ENCODE measurements at regions of chr9 and their contacts with region 1.

Region 1: GRCh38 chr9:107465467-107466451 is 23.8 kb downstream of the KLF4 start:
- DNase-seq: peak in 9 of 10 donors; percentile 20 to 92 (median 60)

Region 2: GRCh38 chr9:106945727-106946660 is 519.8 kb before region 1 on chr9:
- intact Hi-C with region 1: no loop called
- DNase-seq: no peak

Region 3: GRCh38 chr9:107489687-107490605 is 24.2 kb after region 1 on chr9 and contains the start of gene KLF4:
- intact Hi-C with region 1: loop called (anchors 2 kb)
- DNase-seq: peak; percentile 65 to 97 (median 78)

Region 4: GRCh38 chr9:107548048-107548800 is 82.5 kb after region 1 on chr9:
- intact Hi-C with region 1: no loop called
- DNase-seq: peak in 2 of 10 donors; percentile 21 to 63

Region 5: DNA sequence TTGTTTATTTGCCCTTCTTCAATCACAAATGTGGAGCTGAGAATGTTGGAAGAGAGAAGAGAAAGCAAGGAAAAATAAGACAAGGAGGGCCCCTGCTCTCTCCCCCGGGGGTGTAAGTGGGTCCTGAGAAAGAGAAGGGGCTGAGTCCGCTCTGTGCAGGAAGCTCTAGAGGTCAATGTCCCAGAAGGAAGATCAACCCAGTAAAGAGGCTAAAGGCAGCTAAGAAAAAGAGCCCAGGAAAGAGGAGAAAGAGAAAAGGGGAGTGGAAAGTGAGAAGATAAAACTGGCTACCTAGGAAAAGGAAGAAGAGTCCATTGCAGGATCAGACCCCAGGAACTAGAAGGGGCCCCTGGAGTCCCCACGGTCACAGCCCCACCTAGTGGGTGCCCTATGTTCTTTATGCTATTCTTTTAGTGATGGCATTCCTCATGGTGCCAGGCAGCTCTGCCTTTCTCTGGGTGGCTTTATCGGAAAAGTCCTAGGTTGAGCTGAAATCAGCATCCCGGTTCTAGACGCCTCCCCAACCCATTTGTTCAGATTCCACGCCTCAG is 806.7 kb after region 1 on chr9:
- intact Hi-C with region 1: loop called (anchors 5 kb)
- DNase-seq: peak in 8 of 10 donors; percentile 18 to 92 (median 54)

Region 6: GRCh38 chr9:108551030-108551838 is 1085.5 kb after region 1 on chr9:
- intact Hi-C with region 1: loop called (anchors 10 kb)
- DNase-seq: no peak

Region 7: GRCh38 chr9:108761655-108762347 is 1296.0 kb after region 1 on chr9:
- intact Hi-C with region 1: loop called (anchors 5 kb)
- DNase-seq: peak in 8 of 10 donors; percentile 36 to 92 (median 73)

Measured in posterior cingulate gyrus (tissue), 11 donors.